Ascending aorta (tissue), 2 donors: ENCODE measurements at regions of chr17 and their contacts with region 1.

Region 1: GRCh38 chr17:31825961-31826691 is 32.9 kb downstream of the COPRS start:
- DNase-seq: peak; percentile 31 to 84
- H3K4me3 ChIP-seq: no peak overlapping the region
- H3K27ac ChIP-seq: peak overlapping the region; percentile 72 to 74
- H3K4me1 ChIP-seq: peaks cover 0 to 4% of the 10 kb centered on the region in 2 donors
- H3K27me3 ChIP-seq: no peaks in the 10 kb centered on the region
- CTCF ChIP-seq: no peak

Region 2: DNA sequence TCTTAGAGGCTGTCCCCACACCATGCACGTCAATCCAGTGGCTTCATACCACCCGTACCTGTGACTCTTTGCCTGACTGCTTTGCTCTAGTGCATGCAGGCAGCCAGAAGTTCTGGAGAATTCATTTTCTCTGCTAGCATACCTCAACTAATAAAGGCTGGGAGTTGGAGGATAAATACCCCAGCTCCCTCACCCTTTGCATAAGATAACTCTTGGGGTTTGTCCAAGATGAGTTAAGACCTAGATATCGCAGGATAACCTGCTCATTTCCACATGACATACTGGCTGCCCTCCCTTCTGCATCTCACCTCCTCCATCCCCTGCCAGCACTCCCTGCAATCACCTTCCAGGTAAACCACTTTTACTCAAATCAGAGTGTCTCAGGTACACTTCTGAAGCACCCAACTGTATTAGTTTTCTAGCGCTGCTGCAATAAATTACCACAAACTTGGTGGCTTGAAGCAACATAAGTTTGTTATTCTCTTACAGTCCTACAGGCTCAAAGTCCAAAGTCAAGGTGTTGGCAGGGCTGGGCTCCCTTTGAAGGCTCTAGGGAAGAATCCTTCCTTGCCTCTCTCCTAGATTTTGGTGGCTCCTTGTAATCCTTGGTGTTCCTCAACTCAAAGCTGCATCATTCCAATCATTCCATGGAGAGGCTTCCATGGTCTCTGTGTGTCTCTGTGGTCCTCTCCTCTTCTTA is 1148.4 kb before region 1 on chr17:
- intact Hi-C with region 1: no loop called
- DNase-seq: no peak
- H3K4me3 ChIP-seq: no peak overlapping the region
- H3K27ac ChIP-seq: no peak overlapping the region
- H3K4me1 ChIP-seq: no peaks in the 10 kb centered on the region
- H3K27me3 ChIP-seq: no peaks in the 10 kb centered on the region
- CTCF ChIP-seq: no peak

Region 3: GRCh38 chr17:31564883-31565301 is 261.2 kb before region 1 on chr17:
- intact Hi-C with region 1: no loop called
- DNase-seq: no peak
- H3K4me3 ChIP-seq: peak overlapping the region in 1 of 2 donors; percentile 3
- H3K27ac ChIP-seq: peak overlapping the region; percentile 83 to 91
- H3K4me1 ChIP-seq: peaks cover 6 to 69% of the 10 kb centered on the region in 2 donors
- H3K27me3 ChIP-seq: no peaks in the 10 kb centered on the region
- CTCF ChIP-seq: no peak

Region 4: DNA sequence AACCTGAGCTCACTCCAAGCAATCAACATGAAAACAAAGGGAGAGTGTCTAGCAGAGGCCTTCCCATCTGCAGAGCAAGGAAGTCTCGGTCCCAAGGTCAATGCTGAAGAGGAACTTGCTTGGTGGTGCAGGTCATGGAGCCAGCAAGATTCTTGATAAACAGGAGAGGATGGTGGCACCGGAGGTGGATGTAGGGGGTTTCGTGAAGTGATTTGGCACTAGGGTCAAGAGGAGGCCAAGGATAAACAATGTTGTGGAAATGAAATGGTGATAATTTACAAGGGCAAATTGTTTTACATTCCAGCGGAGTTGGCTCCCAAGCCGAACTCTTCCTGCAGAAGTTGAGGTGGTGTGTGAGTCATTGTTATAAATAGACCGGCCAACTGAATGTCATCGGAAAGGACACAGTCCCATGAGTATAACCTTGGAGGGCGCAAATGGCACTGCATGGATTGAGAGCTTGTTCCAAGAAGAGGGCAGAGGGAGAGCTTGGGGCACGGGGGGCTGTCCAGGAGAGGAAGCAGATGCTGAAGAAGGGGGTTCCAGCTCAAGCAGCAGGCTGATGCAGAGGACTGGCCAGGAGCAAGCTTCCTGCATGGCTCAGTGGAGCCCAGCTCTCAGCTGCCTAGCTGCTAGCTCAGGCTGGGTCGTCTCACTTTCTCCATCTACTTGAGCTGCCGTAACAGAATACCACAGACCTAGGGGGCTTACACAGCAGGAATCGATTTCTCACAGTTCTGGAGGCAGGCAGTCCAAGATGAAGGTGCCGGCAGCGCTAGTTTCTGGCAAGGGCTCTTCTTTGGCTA is 103.7 kb before region 1 on chr17:
- intact Hi-C with region 1: loop called (anchors 5 kb)
- DNase-seq: peak in 1 of 2 donors; percentile 79
- H3K4me3 ChIP-seq: no peak overlapping the region
- H3K27ac ChIP-seq: peak overlapping the region; percentile 67 to 81
- H3K4me1 ChIP-seq: peaks cover 5 to 22% of the 10 kb centered on the region in 2 donors
- H3K27me3 ChIP-seq: no peaks in the 10 kb centered on the region
- CTCF ChIP-seq: no peak

Region 5: GRCh38 chr17:31778523-31778922 is 47.6 kb before region 1 on chr17:
- intact Hi-C with region 1: loop called (anchors 5 kb)
- DNase-seq: no peak
- H3K4me3 ChIP-seq: no peak overlapping the region
- H3K27ac ChIP-seq: no peak overlapping the region
- H3K4me1 ChIP-seq: no peaks in the 10 kb centered on the region
- H3K27me3 ChIP-seq: no peaks in the 10 kb centered on the region
- CTCF ChIP-seq: no peak